ENCODE measurements at regions of chr15 and their contacts with region 1.

Region 1: GRCh38 chr15:40941528-40942336 is 11.5 kb upstream of the CHAC1 start:
- DNase-seq: peak; percentile 89
- ATAC-seq: peak; percentile 83
- H3K4me3 Mint-ChIP-seq: peak overlapping the region; percentile 62
- H3K27ac Mint-ChIP-seq: no peak overlapping the region
- H3K4me1 Mint-ChIP-seq: peaks cover 25% of the 10 kb centered on the region
- H3K27me3 Mint-ChIP-seq: peaks cover 36% of the 10 kb centered on the region
- CTCF ChIP-seq: peak; percentile 73

Region 2: DNA sequence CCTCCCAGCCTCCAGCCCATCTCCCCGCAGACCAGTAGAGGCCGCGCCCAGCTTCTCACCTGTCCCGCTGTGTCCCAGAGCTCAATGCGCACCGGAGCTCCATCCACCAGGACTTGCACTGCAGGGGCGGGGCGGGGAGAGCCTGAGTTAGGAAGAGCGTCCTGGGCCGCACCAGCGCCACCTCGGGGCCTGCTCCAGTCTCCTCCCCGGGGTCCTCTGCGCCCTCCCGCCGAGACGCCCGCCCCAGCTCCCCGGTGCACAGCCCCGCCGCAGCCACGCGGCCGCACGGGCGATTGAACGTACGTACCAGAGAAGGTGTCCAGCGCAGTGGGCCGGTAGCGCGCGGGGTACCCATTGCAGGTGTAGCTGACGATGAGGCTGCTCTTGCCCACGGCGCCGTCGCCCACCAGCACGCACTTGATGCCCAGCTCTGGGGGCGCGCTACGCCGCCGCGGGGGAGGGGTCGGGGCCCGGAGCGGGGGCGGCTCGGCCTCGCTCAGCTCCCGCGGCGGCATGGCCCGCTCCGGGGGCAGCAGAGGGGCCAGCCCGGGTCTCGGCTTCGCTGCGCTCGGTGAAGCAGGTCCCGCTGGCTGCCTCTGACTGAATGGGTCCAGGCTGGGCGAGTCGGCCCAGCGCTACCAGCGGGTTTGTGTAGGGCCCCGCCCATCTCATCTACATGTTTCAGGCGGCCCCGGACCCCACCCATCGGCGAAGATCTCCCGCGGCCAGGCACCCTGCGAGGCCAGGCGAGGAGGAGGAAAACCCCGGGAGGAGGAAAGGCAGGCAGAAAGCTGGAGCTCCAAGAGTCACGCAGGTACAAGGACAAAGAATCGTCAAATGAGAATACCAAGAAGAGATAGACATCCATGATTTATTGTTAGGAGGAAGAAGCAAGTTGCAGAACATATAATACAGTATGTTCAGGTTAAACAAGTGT is 67.8 kb before region 1 on chr15 and contains the start of gene RHOV:
- CTCF ChIA-PET with region 1: interaction called, 14 read pairs
- POLR2A ChIA-PET with region 1: no interaction called
- DNase-seq: peak; percentile 89
- ATAC-seq: peak; percentile 80
- H3K4me3 Mint-ChIP-seq: peak within 1 kb of the TSS; percentile 79
- H3K27ac Mint-ChIP-seq: no peak within 1 kb of the TSS; the same call in none of the 2 replicates
- H3K4me1 Mint-ChIP-seq: peaks cover 36% of the 10 kb centered on the region
- H3K27me3 Mint-ChIP-seq: peaks cover 4% of the 10 kb centered on the region; the same call in 1 of the 2 replicates
- CTCF ChIP-seq: no peak
- total RNA-seq, gene RHOV: 5.0 to 5.4 TPM (median 5.1 TPM) in 3 replicates

Region 3: GRCh38 chr15:40914486-40914885 is 27.2 kb before region 1 on chr15:
- CTCF ChIA-PET with region 1: interaction called, 82 read pairs
- POLR2A ChIA-PET with region 1: interaction called, 4 read pairs
- DNase-seq: no peak
- ATAC-seq: peak; percentile 31
- H3K4me3 Mint-ChIP-seq: no peak overlapping the region
- H3K27ac Mint-ChIP-seq: 0 out of 2 replicates have a peak overlapping the region, but pooled peaks have one; percentile 1
- H3K4me1 Mint-ChIP-seq: peaks cover 22% of the 10 kb centered on the region
- H3K27me3 Mint-ChIP-seq: 0 out of 2 replicates have a peak, but pooled peaks cover 2% of the 10 kb centered on the region
- CTCF ChIP-seq: no peak

Region 4: GRCh38 chr15:40952901-40953712 is 11.4 kb after region 1 on chr15 and contains the start of gene CHAC1:
- CTCF ChIA-PET with region 1: interaction called, 99 read pairs
- POLR2A ChIA-PET with region 1: interaction called, 80 read pairs
- DNase-seq: peak; percentile 99
- ATAC-seq: peak; percentile 83
- H3K4me3 Mint-ChIP-seq: peak within 1 kb of the TSS; percentile 83
- H3K27ac Mint-ChIP-seq: peak within 1 kb of the TSS; percentile 98
- H3K4me1 Mint-ChIP-seq: peaks cover 39% of the 10 kb centered on the region
- H3K27me3 Mint-ChIP-seq: no peaks in the 10 kb centered on the region
- CTCF ChIP-seq: no peak
- total RNA-seq, gene CHAC1: 17.2 to 31.0 TPM (median 17.7 TPM) in 3 replicates

Region 5: GRCh38 chr15:40974879-40975278 is 33.1 kb after region 1 on chr15:
- CTCF ChIA-PET with region 1: interaction called, 18 read pairs
- POLR2A ChIA-PET with region 1: no interaction called
- DNase-seq: no peak
- ATAC-seq: no peak
- H3K4me3 Mint-ChIP-seq: no peak overlapping the region
- H3K27ac Mint-ChIP-seq: no peak overlapping the region; the same call in 1 of the 2 replicates
- H3K4me1 Mint-ChIP-seq: peaks cover 11% of the 10 kb centered on the region
- H3K27me3 Mint-ChIP-seq: no peaks in the 10 kb centered on the region
- CTCF ChIP-seq: no peak

Region 6: GRCh38 chr15:41031232-41032078 is 89.7 kb after region 1 on chr15:
- CTCF ChIA-PET with region 1: interaction called, 5 read pairs
- POLR2A ChIA-PET with region 1: interaction called, 13 read pairs
- DNase-seq: no peak
- ATAC-seq: no peak
- H3K4me3 Mint-ChIP-seq: no peak overlapping the region
- H3K27ac Mint-ChIP-seq: peak overlapping the region; percentile 42
- H3K4me1 Mint-ChIP-seq: peaks cover 3% of the 10 kb centered on the region; the same call in 1 of the 2 replicates
- H3K27me3 Mint-ChIP-seq: no peaks in the 10 kb centered on the region
- CTCF ChIP-seq: no peak